Psoas muscle (tissue), 8 donors: ENCODE measurements at regions of chr4 and their contacts with region 1.

Region 1: GRCh38 chr4:168995537-168996295 is 14.3 kb downstream of the CBR4 start:
- DNase-seq: no peak
- ATAC-seq: peak in 2 of 4 donors; percentile 60 to 75
- H3K4me3 ChIP-seq: no peak overlapping the region
- H3K27ac ChIP-seq: no peak overlapping the region
- H3K4me1 ChIP-seq: peaks cover 5% of the 10 kb centered on the region
- H3K27me3 ChIP-seq: no peaks in the 10 kb centered on the region
- CTCF ChIP-seq: peak; percentile 25

Region 2: DNA sequence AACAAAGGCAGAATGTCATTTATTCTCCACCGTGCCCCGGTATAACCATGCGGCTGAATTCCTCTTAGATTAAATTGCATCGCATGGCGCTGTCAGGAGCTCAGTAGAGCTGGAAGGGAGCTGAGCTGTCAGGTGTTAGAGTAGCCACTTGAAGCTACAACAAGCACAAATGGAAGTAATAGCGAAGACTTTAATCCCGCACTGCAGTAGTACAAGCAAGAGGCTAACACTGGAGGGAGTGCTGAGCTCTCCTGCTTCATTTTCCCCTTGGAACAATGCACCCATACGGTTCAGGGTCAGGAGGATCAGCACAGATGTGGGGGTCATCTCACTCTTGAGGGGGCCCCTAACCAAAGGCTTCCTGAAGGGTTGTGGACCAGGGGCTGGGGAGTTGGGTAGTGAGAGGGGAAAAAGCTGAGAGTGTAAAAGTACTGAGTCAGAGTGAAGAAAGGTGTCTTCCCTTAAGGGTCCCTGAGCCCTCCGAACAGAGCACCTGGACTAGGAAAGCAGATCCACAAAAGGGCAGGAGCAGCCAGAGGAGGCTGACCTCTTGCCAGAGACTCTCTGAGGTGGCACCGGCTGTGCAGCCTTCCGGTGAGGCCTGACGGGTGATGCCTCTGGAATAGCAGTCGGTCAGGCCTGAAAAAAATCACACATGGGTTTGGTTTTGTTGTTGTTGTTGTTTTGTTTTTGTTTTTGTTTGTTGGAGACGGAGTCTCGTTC is 50.3 kb after region 1 on chr4:
- intact Hi-C with region 1: no loop called
- DNase-seq: no peak
- ATAC-seq: no peak
- H3K4me3 ChIP-seq: no peak overlapping the region
- H3K27ac ChIP-seq: no peak overlapping the region
- H3K4me1 ChIP-seq: no peaks in the 10 kb centered on the region
- H3K27me3 ChIP-seq: no peaks in the 10 kb centered on the region
- CTCF ChIP-seq: no peak

Region 3: DNA sequence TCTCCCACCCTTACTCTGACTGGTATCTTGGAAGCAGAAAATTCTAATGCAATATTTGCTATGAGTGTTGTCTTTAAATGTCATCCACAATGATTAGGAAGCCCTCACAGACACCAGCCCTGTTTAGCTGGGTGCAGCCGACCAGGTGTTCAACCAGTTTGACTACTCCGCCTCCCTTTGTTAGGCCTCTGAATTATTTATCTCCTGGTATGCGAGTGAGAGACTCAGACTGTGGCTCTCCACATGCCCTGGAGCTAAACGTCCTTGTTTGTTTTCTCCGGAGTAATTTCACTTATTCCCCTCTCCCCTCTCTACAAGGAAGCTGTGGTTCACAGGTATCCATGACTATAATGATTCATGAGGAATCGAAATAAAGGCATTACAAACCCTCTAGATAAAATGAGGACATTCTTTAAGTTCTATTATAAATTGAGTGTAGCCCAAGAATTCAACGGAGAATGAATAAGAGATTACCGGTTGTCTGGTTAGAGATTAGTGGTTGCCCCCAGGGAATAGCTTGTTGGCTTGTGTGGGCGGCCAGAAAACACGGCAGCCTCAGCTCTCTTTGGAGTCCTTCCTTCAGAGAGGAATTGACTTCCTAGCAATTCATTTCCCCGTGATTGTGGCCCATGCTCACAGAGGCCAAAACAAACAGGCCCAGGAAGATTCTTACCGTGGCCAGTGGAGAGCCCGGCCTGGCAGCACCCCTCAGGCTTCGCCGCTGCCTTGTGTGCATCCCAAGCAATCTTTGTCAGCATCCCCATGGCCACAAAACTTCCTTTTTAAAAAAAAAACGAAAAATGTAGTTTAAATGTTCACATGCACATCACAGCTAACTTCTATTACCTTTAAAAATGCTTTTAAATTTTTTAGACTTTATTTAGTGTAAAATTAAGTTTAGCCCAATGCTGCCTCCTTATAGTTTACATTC is 74.5 kb after region 1 on chr4:
- intact Hi-C with region 1: no loop called
- DNase-seq: peak in 1 of 2 donors; percentile 29
- ATAC-seq: peak in 1 of 4 donors; percentile 16
- H3K4me3 ChIP-seq: no peak overlapping the region
- H3K27ac ChIP-seq: peak overlapping the region; percentile 30
- H3K4me1 ChIP-seq: no peaks in the 10 kb centered on the region
- H3K27me3 ChIP-seq: no peaks in the 10 kb centered on the region
- CTCF ChIP-seq: no peak

Region 4: DNA sequence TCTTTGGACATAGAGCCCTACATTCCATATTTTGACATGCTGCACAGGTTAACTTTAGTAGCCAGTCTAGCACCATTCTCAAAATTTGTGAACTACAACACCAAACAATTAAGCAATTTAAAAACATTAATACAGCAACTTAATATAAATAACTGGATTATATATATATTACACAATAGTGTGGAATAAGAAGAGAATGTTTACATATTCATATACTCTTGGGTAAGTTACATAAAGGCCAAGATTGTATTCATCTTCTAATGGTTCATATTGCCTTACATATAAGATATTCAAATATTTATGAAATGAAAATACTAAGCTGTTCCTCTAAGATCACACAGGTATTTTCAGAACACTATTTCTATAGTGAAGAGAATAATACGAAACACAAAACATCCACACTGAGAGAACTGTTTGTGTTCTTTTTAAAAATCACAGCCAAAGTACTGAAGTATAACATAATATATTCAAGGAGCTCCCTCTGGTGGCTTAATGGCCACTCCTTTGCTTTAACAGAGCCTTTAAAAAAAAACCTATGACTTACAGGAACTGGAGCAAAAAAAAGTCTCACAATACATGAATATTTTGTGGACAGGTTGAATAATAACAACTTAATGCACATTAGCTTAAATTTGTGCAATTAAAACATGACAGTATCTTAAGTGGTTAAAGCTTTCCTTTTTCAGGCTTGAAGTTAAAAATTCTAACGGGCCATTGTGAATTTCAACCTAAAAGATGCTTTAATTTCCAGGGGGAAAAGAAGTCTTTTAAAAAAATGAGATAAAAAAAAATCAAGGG is 570.5 kb after region 1 on chr4:
- intact Hi-C with region 1: loop called in 1 of 2 experiments (anchors 10 kb)
- DNase-seq: no peak
- ATAC-seq: peak in 2 of 4 donors; percentile 53 to 77
- H3K4me3 ChIP-seq: no peak overlapping the region
- H3K27ac ChIP-seq: no peak overlapping the region
- H3K4me1 ChIP-seq: no peaks in the 10 kb centered on the region
- H3K27me3 ChIP-seq: no peaks in the 10 kb centered on the region
- CTCF ChIP-seq: peak; percentile 60